HEK293T (cell line): ENCODE measurements at regions of chr7 and their contacts with region 1.

Region 1: DNA sequence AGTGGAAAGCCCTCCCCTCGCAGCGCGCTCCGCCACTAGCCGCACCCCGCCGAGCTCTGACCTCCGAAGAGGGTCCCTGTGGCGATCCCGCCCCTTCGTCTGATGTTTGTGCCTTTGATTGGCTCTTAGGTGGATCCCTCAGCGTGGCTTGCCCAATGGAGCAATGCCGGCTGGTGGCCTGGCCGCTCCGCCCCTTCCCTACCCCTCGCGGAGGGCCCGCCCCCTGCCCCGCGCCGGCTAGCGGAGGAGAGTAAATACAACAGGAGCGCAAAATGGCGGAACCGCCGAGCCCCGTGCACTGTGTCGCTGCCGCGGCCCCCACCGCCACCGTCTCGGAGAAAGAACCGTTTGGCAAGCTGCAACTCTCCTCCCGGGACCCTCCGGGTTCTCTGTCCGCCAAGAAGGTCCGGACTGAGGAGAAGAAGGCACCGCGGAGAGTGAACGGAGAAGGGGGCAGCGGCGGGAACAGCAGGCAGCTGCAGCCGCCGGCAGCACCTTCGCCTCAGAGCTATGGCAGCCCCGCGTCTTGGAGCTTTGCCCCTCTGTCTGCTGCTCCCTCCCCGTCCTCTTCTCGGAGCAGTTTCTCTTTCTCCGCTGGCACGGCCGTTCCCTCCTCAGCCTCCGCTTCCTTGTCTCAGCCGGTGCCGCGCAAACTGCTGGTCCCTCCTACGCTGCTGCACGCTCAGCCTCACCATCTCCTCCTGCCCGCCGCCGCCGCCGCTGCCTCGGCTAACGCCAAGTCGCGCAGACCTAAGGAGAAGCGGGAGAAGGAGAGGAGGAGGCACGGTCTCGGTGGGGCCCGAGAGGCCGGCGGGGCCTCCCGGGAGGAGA is at the start of gene RSBN1L:
- DNase-seq: peak; percentile 93

Region 2: DNA sequence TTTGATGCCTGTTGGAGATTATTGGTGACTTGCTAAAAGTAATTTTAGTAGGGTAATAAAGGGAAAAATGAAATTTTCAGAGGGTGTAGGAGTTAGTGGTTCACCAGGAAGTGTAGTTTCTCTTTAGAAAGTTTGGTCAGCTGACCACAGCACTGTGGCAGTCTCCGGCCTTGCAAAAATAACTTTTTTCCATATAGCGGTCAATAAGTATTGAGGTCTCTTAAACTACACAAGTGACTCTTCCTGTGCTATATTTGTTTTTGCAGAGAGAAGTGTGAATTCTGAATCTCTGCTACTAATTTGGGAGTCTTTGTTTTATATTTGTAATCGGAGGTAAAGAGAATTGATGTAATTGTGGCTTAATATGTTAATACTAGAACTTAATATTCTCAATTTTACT is 135.1 kb before region 1 on chr7:
- CTCF ChIA-PET with region 1: no interaction called
- POLR2A ChIA-PET with region 1: no interaction called
- DNase-seq: no peak

Region 3: DNA sequence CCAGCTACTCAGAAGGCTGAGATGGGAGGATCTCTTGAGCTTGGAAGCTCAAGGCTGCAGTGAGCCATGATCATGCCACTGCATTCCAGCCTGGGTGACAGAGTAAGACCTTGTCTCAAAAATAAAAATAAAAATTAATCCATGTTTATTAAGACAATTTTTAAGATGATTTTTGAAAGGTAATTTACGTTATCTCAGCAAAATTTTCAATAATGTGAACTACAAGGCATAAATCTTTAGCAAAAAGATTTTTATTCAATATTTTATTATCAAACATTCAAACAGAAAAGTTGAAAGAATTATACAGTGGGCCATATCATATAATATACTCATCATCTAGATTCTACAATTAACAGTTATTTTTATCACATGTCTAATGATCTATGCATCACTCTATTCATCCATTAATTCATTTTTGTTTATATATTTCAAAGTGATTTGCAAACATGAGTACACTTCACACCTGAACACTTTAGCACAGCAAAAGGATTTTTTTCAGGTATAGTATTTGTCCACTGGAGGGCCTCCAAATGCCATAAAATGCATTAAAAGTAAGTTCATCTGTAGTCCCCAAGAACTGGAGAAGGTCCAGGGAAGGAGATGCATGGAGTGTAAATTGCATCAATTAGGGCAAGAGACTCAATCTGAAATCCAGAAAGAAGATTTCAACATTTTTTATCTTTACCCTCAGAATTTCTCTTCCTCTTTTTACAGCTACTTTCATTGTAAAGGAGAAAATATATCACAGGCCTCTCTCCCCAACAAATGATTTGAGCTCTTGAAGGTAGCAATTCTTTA is 38.8 kb before region 1 on chr7:
- CTCF ChIA-PET with region 1: no interaction called
- POLR2A ChIA-PET with region 1: interaction called, 10 read pairs
- DNase-seq: peak; percentile 31

Region 4: GRCh38 chr7:77685233-77685632 is 11.2 kb before region 1 on chr7:
- CTCF ChIA-PET with region 1: no interaction called
- POLR2A ChIA-PET with region 1: interaction called, 13 read pairs
- DNase-seq: no peak